ENCODE measurements at regions of chr7 and their contacts with region 1.

Region 1: DNA sequence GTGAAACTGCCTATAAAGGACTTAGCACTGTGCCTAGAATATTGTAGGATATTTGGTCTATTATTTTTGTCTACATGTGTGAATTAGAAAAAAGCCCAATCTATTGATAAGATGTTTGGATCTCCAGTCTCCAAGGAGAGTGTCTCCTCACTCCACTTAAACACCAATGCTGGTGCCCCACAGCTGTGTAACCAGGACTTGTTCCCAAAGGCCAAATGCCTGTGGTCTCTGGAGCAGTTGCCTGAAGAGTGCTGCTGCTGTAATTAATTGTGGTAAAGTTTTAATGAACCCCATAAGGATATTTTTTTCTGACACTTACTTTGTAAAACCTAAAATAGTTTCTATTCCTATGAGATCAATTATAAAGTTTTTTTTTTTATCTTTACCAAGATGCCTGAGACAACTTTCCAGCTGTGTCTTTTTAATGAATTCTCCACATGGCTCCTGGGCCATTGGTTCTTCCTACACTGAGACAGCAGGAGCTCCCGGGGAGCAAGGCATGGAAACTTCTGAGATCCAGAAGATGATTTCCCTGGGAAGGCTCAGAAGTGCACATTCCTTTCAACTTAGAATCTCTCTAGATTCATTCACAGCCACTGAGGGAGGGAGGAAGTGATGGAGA is 11.2 kb upstream of the OR2A5 start:
- DNase-seq: no peak
- ATAC-seq: no peak
- H3K4me3 ChIP-seq: no peak overlapping the region
- H3K4me1 ChIP-seq: no peaks in the 10 kb centered on the region
- CTCF ChIP-seq: no peak

Region 2: GRCh38 chr7:145324081-145324480 is 1286.6 kb after region 1 on chr7:
- intact Hi-C with region 1: loop called in 1 of 2 experiments (anchors 5 kb)
- DNase-seq: no peak
- ATAC-seq: no peak
- H3K4me3 ChIP-seq: no peak overlapping the region
- H3K4me1 ChIP-seq: no peaks in the 10 kb centered on the region
- CTCF ChIP-seq: no peak